Posterior cingulate gyrus (tissue), 11 donors: ENCODE measurements at regions of chr1 and their contacts with region 1.

Region 1: GRCh38 chr1:52697795-52698674 is at the start of gene COA7:
- DNase-seq: peak; percentile 75 to 98 (median 84)

Region 2: GRCh38 chr1:52726265-52727113 is 28.5 kb after region 1 on chr1 and contains the start of gene ZYG11B:
- intact Hi-C with region 1: loop called (anchors 2 kb)
- DNase-seq: peak; percentile 80 to 98 (median 88)